ENCODE measurements at regions of chr12 and their contacts with region 1.

Region 1: DNA sequence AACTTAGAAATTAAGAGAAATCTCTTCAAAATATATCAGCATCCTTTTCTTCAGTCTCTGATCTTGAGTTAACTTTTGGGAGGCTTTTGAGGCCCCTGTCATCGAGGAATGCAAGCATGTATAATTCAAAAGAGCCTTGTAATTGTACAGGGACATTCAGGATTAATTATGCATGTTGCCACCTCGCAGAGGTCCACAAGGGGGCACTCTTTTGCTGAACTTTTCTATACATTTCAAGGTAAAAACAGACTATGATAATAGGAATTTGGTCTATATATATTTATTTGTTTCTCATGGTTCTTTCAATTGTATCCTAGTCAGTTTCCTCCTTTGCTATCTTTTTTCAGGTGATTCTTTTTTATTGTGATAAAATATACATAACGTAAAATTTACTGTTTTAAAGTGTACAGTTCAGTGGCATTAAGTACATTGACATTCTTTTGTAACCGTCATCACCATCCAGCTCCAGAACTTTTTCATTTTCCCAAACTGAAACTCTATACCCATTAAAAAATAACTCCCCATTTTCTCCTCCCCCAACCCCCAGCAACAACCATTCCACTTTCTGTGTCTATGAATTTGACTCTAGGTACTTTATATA is 47.0 kb upstream of the SLC2A13 start:
- DNase-seq: no peak
- H3K4me3 ChIP-seq: no peak overlapping the region
- H3K27ac ChIP-seq: no peak overlapping the region
- H3K4me1 ChIP-seq: peaks cover 0 to 21% (median 4%) of the 10 kb centered on the region in 4 donors
- H3K27me3 ChIP-seq: no peaks in the 10 kb centered on the region
- CTCF ChIP-seq: peak; percentile 70 to 94 (median 87)
- EP300 ChIP-seq: no peak
- POLR2A ChIP-seq: no peak

Region 2: GRCh38 chr12:40224439-40225291 is 71.8 kb after region 1 on chr12 and contains the start of gene LRRK2:
- intact Hi-C with region 1: loop called (anchors 5 kb)
- DNase-seq: peak; percentile 95
- H3K4me3 ChIP-seq: peak within 1 kb of the TSS; percentile 70 to 90 (median 82)
- H3K27ac ChIP-seq: peak within 1 kb of the TSS; percentile 93 to 99 (median 97)
- H3K4me1 ChIP-seq: peaks cover 11 to 50% (median 48%) of the 10 kb centered on the region in 4 donors
- H3K27me3 ChIP-seq: no peaks in the 10 kb centered on the region
- CTCF ChIP-seq: peak in 1 of 3 experiments; percentile 18
- EP300 ChIP-seq: no peak
- POLR2A ChIP-seq: peak; percentile 29
- total RNA-seq, gene LRRK2: 24.0 to 32.8 (median 29.2) TPM

Region 3: GRCh38 chr12:40312982-40313576 is 160.2 kb after region 1 on chr12:
- intact Hi-C with region 1: loop called (anchors 2 kb)
- DNase-seq: no peak
- H3K4me3 ChIP-seq: no peak overlapping the region
- H3K27ac ChIP-seq: no peak overlapping the region
- H3K4me1 ChIP-seq: peaks cover 0 to 7% (median 0%) of the 10 kb centered on the region in 4 donors
- H3K27me3 ChIP-seq: no peaks in the 10 kb centered on the region
- CTCF ChIP-seq: peak; percentile 45 to 62 (median 49)
- EP300 ChIP-seq: no peak
- POLR2A ChIP-seq: no peak

Measured in esophagus muscularis mucosa (tissue), 4 donors.